ENCODE measurements at regions of chr16 and their contacts with region 1.

Region 1: DNA sequence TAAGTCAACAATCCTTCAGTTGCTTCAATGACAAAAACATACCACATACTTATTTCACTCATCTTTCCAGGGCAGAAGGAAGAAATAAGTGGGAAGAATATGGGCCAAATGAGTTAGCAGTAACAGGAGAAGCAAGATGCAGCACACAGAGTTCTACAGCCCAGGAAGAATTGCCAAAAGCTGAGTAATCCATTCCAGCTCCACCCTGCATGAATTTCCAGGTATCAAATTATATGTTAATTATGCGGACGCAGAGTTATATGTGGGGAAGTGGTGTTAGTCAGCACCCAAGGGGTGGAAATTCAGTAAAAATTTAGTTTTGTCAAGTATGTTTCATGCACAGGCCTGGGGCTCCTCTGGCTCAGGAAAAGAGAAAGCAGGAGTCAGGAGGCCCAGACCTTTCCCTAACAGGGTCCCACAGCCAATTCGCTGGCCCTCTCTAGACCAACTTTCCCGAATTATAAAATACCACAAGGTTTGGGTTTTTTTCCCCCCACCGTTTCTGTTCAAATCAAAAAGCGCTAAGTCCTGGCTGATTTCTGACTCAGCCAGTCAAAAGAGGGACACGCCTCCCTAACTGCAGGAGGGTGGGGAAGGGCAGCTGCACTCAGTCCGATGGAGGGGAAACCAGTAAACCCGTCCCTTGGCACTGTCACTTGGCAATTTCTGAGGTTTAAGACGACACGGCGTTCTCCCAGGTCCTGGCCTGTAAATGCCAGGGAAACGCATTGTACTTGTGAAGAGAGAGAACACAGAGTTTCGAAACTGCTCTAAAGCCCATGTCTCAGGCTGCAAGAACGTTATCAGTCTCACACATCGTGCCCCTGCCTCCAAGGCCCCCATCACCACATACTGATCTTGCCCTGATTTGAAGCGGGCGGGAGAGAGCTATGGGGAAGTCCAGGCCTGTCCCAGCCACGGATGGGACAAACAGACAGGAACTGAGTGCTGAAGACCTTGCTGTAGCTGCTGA is 58.1 kb downstream of the ZFHX3 start:
- DNase-seq: peak; percentile 97
- H3K4me3 ChIP-seq: peak overlapping the region in 1 of 2 donors; percentile 22
- H3K27ac ChIP-seq: peak overlapping the region; percentile 88 to 95
- H3K4me1 ChIP-seq: peaks cover 65% of the 10 kb centered on the region
- H3K27me3 ChIP-seq: no peaks in the 10 kb centered on the region
- CTCF ChIP-seq: peak in 1 of 4 experiments; percentile 15
- POLR2A ChIP-seq: peak; percentile 22

Region 2: DNA sequence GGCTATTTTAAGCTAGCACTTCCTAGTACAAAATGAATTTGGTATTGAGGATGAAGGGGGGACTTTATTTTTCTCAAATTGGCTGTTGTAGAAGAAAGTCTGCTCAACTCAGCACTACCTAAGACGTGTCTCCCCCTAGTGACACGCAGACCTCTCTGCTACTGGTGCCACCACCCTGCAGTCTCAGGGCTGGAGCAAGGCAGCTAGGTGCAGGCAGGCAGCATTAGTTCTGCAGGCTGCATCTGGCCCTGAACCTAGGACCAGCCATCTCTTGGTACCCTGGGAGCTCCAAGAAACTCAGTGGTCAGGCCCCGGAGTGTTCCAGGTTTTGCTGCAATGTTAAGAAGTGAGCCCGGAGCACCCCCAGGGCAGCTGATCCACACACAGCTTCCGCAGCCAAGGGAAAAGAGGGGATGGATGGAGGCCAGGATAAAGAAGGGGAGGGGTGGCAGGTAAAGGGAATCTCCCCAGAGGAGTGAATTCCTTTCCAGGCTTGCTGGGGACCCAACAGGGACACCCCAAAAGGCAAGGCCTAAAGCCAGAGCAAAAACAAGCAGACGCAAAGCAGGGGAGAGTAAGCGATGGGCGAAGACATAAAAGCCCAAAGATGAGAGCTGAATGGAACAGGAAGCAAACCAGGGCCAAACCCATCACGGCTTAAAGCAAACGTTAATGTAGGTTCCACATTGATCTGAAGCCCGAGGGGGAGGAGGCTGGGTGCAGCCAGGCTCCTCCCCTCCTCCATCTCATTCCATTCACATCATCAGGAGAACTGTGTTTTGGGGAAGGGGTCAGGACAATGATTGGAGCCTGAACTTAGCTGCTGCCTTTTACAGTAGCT is 142.5 kb before region 1 on chr16:
- intact Hi-C with region 1: loop called (anchors 5 kb)
- DNase-seq: no peak
- H3K4me3 ChIP-seq: no peak overlapping the region
- H3K27ac ChIP-seq: peak overlapping the region; percentile 71 to 72
- H3K4me1 ChIP-seq: peaks cover 19% of the 10 kb centered on the region
- H3K27me3 ChIP-seq: no peaks in the 10 kb centered on the region
- CTCF ChIP-seq: peak in 2 of 4 experiments; percentile 15 to 25
- POLR2A ChIP-seq: no peak

Region 3: DNA sequence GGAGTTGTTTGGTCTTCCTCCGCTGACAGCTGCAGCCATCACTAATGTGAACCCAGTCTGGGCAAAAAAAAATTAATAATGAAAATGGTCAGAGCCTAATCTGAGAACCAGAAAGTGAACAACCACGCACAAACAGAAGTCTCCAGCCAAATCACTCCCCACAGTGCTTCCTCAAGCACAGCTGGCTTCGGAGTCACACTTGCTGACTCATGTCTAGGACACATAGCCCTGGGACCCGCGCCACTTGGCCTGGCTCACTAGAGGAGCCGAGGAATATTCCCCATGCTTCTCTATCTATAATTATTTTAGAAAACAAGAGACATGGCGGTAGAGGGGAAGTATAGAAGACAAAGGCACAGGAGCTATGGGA is 51.1 kb before region 1 on chr16:
- intact Hi-C with region 1: loop called (anchors 5 kb)
- DNase-seq: peak; percentile 81
- H3K4me3 ChIP-seq: no peak overlapping the region
- H3K27ac ChIP-seq: peak overlapping the region; percentile 90 to 92
- H3K4me1 ChIP-seq: peaks cover 33% of the 10 kb centered on the region
- H3K27me3 ChIP-seq: no peaks in the 10 kb centered on the region
- CTCF ChIP-seq: no peak
- POLR2A ChIP-seq: no peak

Region 4: GRCh38 chr16:72952811-72953595 is 36.9 kb before region 1 on chr16:
- intact Hi-C with region 1: loop called (anchors 5 kb)
- DNase-seq: no peak
- H3K4me3 ChIP-seq: no peak overlapping the region
- H3K27ac ChIP-seq: peak overlapping the region; percentile 62 to 75
- H3K4me1 ChIP-seq: peaks cover 22% of the 10 kb centered on the region
- H3K27me3 ChIP-seq: no peaks in the 10 kb centered on the region
- CTCF ChIP-seq: no peak
- POLR2A ChIP-seq: no peak

Region 5: GRCh38 chr16:73032541-73033267 is 42.8 kb after region 1 on chr16:
- intact Hi-C with region 1: loop called (anchors 5 kb)
- DNase-seq: no peak
- H3K4me3 ChIP-seq: no peak overlapping the region
- H3K27ac ChIP-seq: peak overlapping the region; percentile 27 to 53
- H3K4me1 ChIP-seq: peaks cover 20% of the 10 kb centered on the region
- H3K27me3 ChIP-seq: no peaks in the 10 kb centered on the region
- CTCF ChIP-seq: no peak
- POLR2A ChIP-seq: no peak

Region 6: DNA sequence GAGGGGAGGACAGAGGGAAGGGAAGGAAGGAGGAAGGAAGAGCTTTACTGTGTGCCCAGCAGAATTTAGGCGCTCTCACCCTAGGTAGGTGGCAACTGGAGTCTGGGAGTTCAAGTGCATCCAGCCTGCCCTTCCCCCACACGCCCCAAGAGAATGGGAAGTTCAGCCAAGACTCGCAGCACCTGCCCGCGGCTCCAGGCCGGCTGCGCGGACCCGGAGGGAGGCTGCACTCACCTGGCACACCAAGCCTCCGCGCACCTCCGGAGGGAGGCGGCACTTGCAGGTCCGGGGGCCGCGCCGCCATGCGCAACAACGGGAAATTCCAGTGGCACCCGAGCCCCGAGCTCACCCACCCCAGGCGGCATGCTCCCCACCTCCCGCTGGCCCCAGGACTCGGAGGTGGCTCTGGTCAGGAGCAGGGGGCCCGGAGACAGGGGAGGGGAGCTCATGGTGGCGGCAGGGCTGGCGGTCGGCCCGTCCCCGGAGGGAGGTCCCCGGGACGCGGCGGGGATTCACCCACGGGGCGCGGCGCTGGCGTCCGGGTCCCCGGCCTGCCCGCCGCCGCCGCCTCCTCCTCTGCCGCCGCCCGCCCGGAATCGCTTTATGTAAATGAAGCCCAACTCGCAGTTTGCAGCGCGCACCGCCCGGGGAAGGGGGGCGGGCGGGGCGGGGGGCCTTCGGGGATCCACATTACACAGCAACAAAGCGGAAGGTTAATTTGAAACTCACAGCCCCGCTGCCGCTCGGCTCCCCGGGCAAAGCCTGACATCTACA is 57.8 kb after region 1 on chr16 and contains the start of gene ZFHX3:
- intact Hi-C with region 1: loop called (anchors 5 kb)
- DNase-seq: peak; percentile 78
- H3K4me3 ChIP-seq: peak within 1 kb of the TSS; percentile 79 to 92
- H3K27ac ChIP-seq: peak within 1 kb of the TSS; percentile 97 to 100
- H3K4me1 ChIP-seq: peaks cover 46% of the 10 kb centered on the region
- H3K27me3 ChIP-seq: no peaks in the 10 kb centered on the region
- CTCF ChIP-seq: peak in 1 of 4 experiments; percentile 29
- POLR2A ChIP-seq: peak; percentile 11
- total RNA-seq, gene ZFHX3: 51.1 to 53.9 TPM

Measured in prostate gland (tissue), 2 donors.